ENCODE measurements at regions of chr3 and their contacts with region 1.

Region 1: GRCh38 chr3:175737646-175738572 is 878.8 kb downstream of the NAALADL2 start:
- DNase-seq: peak; percentile 30
- H3K4me3 Mint-ChIP-seq: peak overlapping the region; percentile 8
- H3K27ac Mint-ChIP-seq: peak overlapping the region; percentile 83
- H3K4me1 Mint-ChIP-seq: peaks cover 54% of the 10 kb centered on the region
- H3K27me3 Mint-ChIP-seq: no peaks in the 10 kb centered on the region
- CTCF ChIP-seq: no peak

Region 2: DNA sequence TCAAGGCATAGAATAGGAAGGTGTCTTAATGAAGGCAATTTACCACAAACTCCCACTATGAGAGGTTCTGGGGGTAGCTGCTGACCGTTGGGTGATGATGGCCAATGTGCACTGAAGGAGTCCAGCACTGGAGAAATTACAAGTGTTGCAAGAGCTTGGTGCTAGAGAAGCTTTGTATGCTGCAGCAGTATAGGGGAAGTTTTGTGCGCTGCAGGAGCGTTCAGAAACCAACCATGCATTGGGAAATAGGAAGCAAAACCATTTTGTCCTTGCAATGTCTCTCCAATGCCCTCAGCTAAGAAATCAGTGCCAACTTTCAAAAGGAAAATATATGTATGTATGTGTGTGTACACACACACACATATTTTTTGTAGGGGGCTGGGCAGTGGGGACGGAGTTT is 1320.3 kb before region 1 on chr3:
- CTCF ChIA-PET with region 1: no interaction called
- intact Hi-C with region 1: loop called (anchors 10 kb)
- DNase-seq: no peak
- H3K4me3 Mint-ChIP-seq: no peak overlapping the region
- H3K27ac Mint-ChIP-seq: no peak overlapping the region
- H3K4me1 Mint-ChIP-seq: no peaks in the 10 kb centered on the region
- H3K27me3 Mint-ChIP-seq: no peaks in the 10 kb centered on the region
- CTCF ChIP-seq: no peak

Region 3: GRCh38 chr3:175422744-175423143 is 315.2 kb before region 1 on chr3:
- CTCF ChIA-PET with region 1: no interaction called
- intact Hi-C with region 1: loop called (anchors 1 kb)
- DNase-seq: no peak
- H3K4me3 Mint-ChIP-seq: no peak overlapping the region
- H3K27ac Mint-ChIP-seq: no peak overlapping the region
- H3K4me1 Mint-ChIP-seq: no peaks in the 10 kb centered on the region
- H3K27me3 Mint-ChIP-seq: no peaks in the 10 kb centered on the region
- CTCF ChIP-seq: no peak

Region 4: GRCh38 chr3:175495331-175495730 is 242.6 kb before region 1 on chr3:
- CTCF ChIA-PET with region 1: no interaction called
- intact Hi-C with region 1: loop called (anchors 5 kb)
- DNase-seq: no peak
- H3K4me3 Mint-ChIP-seq: no peak overlapping the region
- H3K27ac Mint-ChIP-seq: peak overlapping the region; percentile 8
- H3K4me1 Mint-ChIP-seq: peaks cover 51% of the 10 kb centered on the region
- H3K27me3 Mint-ChIP-seq: no peaks in the 10 kb centered on the region
- CTCF ChIP-seq: no peak

Region 5: GRCh38 chr3:175606650-175607318 is 131.1 kb before region 1 on chr3:
- CTCF ChIA-PET with region 1: no interaction called
- intact Hi-C with region 1: loop called (anchors 2 kb)
- DNase-seq: no peak
- H3K4me3 Mint-ChIP-seq: no peak overlapping the region
- H3K27ac Mint-ChIP-seq: peak overlapping the region; percentile 87
- H3K4me1 Mint-ChIP-seq: peaks cover 69% of the 10 kb centered on the region
- H3K27me3 Mint-ChIP-seq: no peaks in the 10 kb centered on the region
- CTCF ChIP-seq: no peak

Region 6: DNA sequence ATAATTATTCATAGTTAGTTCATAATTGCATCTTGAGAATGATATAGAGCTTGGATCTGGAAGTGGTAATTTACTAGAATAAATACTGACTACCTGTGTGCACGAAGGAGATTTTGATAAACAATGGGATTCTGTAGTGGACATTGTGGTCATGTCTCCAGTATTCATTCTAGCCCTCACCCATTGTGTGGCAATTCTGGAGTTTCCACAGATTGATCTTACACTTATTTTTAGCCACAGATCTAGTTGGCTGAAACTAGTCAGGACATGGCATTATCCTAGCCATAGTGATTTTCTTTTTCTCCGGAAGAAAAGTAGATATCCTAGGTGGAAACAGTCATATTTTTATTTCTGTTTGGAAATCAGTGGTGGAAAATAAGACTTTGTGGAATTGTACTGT is 45.7 kb before region 1 on chr3:
- CTCF ChIA-PET with region 1: no interaction called
- intact Hi-C with region 1: no loop called
- DNase-seq: no peak
- H3K4me3 Mint-ChIP-seq: no peak overlapping the region
- H3K27ac Mint-ChIP-seq: no peak overlapping the region
- H3K4me1 Mint-ChIP-seq: no peaks in the 10 kb centered on the region
- H3K27me3 Mint-ChIP-seq: no peaks in the 10 kb centered on the region
- CTCF ChIP-seq: no peak

Measured in Calu3 (cell line).